AG04450 (cell line): ENCODE measurements at regions of chr19 and their contacts with region 1.

Region 1: GRCh38 chr19:5719961-5720790 is at the starts of genes CATSPERD and LONP1:
- DNase-seq: peak; percentile 97
- H3K4me3 ChIP-seq: peak within 1 kb of the TSS; percentile 98
- H3K27ac ChIP-seq: peak within 1 kb of the TSS; percentile 98
- H3K27me3 ChIP-seq: no peaks in the 10 kb centered on the region
- CTCF ChIP-seq: peak; percentile 90
- polyA plus RNA-seq, gene CATSPERD: not detected in 2 replicates
- polyA plus RNA-seq, gene LONP1: 37.8 and 48.6 TPM in 2 replicates

Region 2: DNA sequence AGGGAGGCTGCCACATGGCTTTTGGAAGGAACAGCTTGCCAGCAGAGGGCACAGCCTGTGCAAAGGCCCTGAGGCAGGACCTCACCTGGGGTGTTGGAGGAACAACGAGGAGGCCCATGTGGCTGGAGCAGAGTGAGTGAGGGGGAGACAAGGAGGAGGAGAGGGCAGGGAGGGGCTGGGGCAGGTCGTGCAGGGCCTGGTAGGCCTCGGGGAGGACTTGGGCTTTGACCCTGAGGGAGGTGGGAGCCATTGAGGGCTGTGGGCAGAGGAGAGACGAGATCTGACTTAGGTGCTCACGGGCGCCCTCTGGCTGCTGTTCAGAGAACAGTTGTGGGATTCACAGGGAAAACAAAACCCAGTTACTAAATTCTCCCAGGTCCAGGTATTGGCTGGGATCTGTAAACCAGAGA is 239.7 kb before region 1 on chr19:
- CTCF ChIA-PET with region 1: no interaction called
- POLR2A ChIA-PET with region 1: no interaction called
- DNase-seq: no peak
- H3K4me3 ChIP-seq: no peak overlapping the region
- H3K27ac ChIP-seq: no peak overlapping the region
- H3K27me3 ChIP-seq: peaks cover 23% of the 10 kb centered on the region
- CTCF ChIP-seq: peak; percentile 50

Region 3: GRCh38 chr19:5681391-5682106 is 38.6 kb before region 1 on chr19:
- CTCF ChIA-PET with region 1: no interaction called
- POLR2A ChIA-PET with region 1: interaction called, 15 read pairs
- DNase-seq: no peak
- H3K4me3 ChIP-seq: peak overlapping the region; percentile 96
- H3K27ac ChIP-seq: no peak overlapping the region
- H3K27me3 ChIP-seq: no peaks in the 10 kb centered on the region
- CTCF ChIP-seq: no peak

Region 4: DNA sequence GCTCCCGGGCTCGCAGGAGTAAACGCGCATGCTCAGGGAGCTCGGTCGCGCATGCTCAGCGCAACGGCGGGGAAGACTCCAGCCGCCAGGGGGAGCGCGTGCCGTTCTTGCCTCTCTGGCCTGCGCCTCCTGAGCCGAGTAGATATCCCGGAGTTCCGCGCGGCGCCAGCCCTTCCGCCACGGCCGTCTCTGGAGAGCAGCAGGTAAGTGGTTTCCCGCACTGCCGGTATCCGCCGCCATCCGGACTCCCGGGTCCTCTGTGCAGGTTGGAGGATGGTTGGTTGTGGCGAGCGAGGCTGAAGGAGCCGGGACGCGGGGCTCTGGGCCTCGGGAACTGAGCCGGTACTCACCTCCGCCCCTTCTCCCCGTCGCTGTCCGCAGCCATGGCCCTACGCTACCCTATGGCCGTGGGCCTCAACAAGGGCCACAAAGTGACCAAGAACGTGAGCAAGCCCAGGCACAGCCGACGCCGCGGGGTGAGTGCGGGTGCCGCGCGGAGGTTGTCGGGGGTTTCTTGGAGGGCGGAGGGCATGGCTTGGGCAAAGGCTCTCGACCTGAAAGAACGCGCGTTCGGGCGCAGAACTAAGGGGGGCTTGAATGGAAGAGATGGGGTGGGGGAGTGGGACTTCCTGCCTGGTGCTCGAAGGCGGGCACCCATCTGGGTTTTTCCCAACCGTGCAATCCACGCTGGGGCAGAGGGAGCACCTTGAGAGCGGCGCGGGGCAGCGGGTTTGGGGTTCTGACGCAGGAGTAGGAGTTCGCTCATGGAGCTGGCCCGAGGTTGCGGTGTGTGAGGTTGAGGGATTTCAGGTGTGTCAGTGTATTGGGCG is 29.8 kb before region 1 on chr19 and contains the start of gene RPL36:
- CTCF ChIA-PET with region 1: interaction called, 23 read pairs
- POLR2A ChIA-PET with region 1: interaction called, 14 read pairs
- DNase-seq: peak; percentile 92
- H3K4me3 ChIP-seq: peak within 1 kb of the TSS; percentile 96
- H3K27ac ChIP-seq: peak within 1 kb of the TSS; percentile 89
- H3K27me3 ChIP-seq: no peaks in the 10 kb centered on the region
- CTCF ChIP-seq: peak; percentile 97
- polyA plus RNA-seq, gene RPL36: 478 and 743 TPM in 2 replicates

Region 5: GRCh38 chr19:5891938-5892771 is 172.0 kb after region 1 on chr19:
- CTCF ChIA-PET with region 1: no interaction called
- POLR2A ChIA-PET with region 1: interaction called, 11 read pairs
- DNase-seq: no peak
- H3K4me3 ChIP-seq: no peak overlapping the region
- H3K27ac ChIP-seq: no peak overlapping the region
- H3K27me3 ChIP-seq: no peaks in the 10 kb centered on the region
- CTCF ChIP-seq: peak; percentile 83